Upper lobe of right lung (tissue), 1 donor: ENCODE measurements at regions of chr18 and their contacts with region 1.

Region 1: DNA sequence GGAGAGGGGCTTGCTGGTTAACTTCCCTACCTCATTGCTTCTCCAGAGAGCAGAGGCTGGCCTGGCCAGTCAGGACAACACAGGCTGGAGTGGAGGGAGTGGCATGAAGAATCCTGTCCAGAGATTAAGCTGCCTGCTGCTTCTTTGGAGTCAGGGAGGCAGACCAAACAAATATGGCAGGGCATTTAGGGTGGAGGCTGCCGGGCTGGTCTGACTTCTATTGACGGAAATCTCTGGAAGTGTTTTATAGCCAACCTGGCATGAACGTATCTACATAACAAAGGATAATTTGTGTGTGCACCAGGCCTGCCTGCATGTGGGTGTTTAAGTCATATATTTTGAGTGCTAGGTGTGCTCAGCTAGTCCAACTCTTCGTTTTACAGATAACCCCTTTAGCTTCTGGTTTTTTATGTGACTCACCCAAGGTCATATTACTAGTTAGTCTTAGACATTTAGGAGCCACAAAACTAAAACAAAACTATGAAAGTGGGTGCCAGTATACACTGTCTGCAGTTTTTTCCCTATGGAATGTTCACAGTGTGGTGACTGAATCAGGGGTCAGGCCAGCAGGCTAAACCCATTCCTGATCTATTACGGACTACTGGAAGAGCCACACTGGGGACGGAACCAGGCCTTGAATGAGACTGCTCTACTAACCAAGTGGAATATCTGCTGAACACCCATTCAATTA is 5.5 kb downstream of the NPC1 start:
- DNase-seq: no peak
- ATAC-seq: no peak
- H3K4me3 ChIP-seq: no peak overlapping the region
- H3K27ac ChIP-seq: no peak overlapping the region
- H3K4me1 ChIP-seq: peaks cover 48% of the 10 kb centered on the region
- H3K27me3 ChIP-seq: no peaks in the 10 kb centered on the region
- CTCF ChIP-seq: no peak

Region 2: GRCh38 chr18:23281626-23282436 is 299.0 kb before region 1 on chr18:
- intact Hi-C with region 1: no loop called
- DNase-seq: no peak
- ATAC-seq: peak; percentile 34
- H3K4me3 ChIP-seq: no peak overlapping the region
- H3K27ac ChIP-seq: no peak overlapping the region
- H3K4me1 ChIP-seq: peaks cover 8% of the 10 kb centered on the region
- H3K27me3 ChIP-seq: no peaks in the 10 kb centered on the region
- CTCF ChIP-seq: no peak

Region 3: DNA sequence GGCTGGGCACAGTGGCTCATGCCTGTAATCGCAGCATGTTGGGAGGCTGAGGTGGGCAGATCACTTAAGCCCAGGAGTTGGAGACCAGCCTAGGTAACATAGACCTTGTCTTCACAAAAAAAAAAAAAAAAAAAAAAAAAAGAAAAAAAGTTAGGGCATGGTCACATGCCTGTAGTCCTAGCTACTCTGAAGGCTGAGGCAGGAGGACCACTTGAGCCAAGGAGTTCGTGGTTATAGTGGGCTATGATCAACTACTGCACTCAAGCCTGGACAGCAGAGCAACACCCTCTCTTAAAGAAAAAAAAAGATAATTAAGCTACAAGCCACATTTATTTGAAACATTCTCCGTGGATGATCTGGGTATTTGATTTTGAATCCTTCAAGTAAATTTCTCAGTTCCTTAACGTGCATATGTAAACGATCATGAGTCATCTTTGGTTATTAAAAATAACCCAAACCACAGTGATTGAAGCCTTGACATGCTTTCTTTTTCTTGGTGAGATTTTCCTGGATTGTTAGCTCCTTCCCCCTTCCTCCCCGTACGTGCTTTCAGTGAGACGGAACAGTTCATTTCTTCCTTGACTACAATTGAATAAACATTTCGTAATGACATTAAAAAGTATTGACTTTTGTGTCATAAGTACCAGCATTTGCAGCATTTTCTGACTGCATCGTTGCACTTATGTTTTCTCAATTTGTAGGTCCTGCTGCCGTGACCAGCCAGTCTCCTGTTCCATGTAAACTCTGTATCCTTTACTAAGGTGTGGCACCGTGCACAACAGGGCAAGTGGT is 57.2 kb before region 1 on chr18:
- intact Hi-C with region 1: loop called (anchors 5 kb)
- DNase-seq: no peak
- ATAC-seq: peak; percentile 67
- H3K4me3 ChIP-seq: no peak overlapping the region
- H3K27ac ChIP-seq: peak overlapping the region; percentile 24
- H3K4me1 ChIP-seq: peaks cover 11% of the 10 kb centered on the region
- H3K27me3 ChIP-seq: no peaks in the 10 kb centered on the region
- CTCF ChIP-seq: no peak

Region 4: GRCh38 chr18:23735021-23735464 is 154.2 kb after region 1 on chr18:
- intact Hi-C with region 1: no loop called
- DNase-seq: no peak
- ATAC-seq: peak; percentile 38
- H3K4me3 ChIP-seq: no peak overlapping the region
- H3K27ac ChIP-seq: no peak overlapping the region
- H3K4me1 ChIP-seq: no peaks in the 10 kb centered on the region
- H3K27me3 ChIP-seq: no peaks in the 10 kb centered on the region
- CTCF ChIP-seq: no peak